Gastrocnemius medialis (tissue), 4 donors: ENCODE measurements at regions of chr6 and their contacts with region 1.

Region 1: DNA sequence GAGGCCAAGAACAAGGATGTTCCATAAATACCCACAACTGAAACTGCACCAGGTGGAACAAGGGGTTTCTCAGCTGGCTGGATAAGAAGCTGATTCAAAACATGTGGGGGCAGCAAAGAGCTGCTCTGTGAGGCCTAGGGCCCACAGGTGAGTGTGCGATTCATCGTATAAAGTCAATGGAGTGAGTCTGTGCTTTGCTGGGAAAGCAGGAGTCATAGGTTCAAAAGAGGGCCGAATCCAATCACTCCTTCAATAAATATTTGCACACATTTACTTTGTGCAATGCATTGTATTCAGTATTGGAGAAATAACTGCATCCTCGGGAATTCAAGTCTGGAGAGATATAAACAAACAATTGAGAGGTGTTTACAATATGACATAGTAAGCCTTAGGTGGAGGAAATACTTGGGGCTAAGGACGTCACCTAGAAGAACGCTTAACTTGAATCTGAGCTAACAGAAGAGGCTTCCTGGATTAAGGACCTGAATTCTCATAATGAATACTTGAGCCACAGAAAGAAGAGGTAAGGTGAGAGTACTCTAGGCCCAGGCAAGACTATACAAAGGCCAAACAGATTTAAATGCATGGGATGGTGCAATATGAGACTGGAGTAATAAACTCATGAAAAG is 83.7 kb upstream of the TMEM30A start:
- DNase-seq: peak; percentile 51 to 77
- ATAC-seq: peak; percentile 86 to 92
- H3K4me3 ChIP-seq: no peak overlapping the region
- H3K27ac ChIP-seq: peak overlapping the region; percentile 68 to 84 (median 76)
- H3K4me1 ChIP-seq: peaks cover 46 to 49% of the 10 kb centered on the region in 2 donors
- H3K27me3 ChIP-seq: no peaks in the 10 kb centered on the region
- CTCF ChIP-seq: peak; percentile 60 to 71 (median 64)
- POLR2A ChIP-seq: no peak

Region 2: DNA sequence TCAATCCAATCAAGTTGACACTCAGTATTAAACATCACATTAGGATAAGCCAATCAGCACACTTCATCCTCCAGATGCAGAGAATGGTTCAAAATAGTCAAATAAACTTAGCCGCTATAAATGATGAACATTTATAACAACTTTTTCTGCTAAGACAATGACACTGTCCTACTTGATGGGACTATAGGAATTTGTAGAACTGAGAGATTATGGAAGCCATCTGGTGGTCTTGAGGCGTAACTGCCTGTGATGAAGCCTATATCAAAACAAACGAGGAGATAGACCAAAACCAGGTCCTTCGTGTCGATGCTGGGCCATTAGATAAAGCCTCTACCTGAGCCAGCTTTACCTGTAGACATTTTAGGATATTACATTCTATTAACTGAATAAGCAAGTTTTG is 793.5 kb before region 1 on chr6:
- in situ Hi-C with region 1: no loop called
- intact Hi-C with region 1: no loop called
- DNase-seq: no peak
- ATAC-seq: no peak
- H3K4me3 ChIP-seq: no peak overlapping the region
- H3K27ac ChIP-seq: no peak overlapping the region
- H3K4me1 ChIP-seq: peaks cover 0 to 15% of the 10 kb centered on the region in 2 donors
- H3K27me3 ChIP-seq: no peaks in the 10 kb centered on the region
- CTCF ChIP-seq: no peak
- POLR2A ChIP-seq: no peak

Region 3: GRCh38 chr6:75296811-75297779 is 71.2 kb before region 1 on chr6:
- in situ Hi-C with region 1: no loop called
- intact Hi-C with region 1: loop called (anchors 1 kb)
- DNase-seq: no peak
- ATAC-seq: peak; percentile 43 to 47
- H3K4me3 ChIP-seq: no peak overlapping the region
- H3K27ac ChIP-seq: no peak overlapping the region
- H3K4me1 ChIP-seq: peaks cover 23 to 27% of the 10 kb centered on the region in 2 donors
- H3K27me3 ChIP-seq: no peaks in the 10 kb centered on the region
- CTCF ChIP-seq: peak; percentile 58 to 79 (median 67)
- POLR2A ChIP-seq: no peak

Region 4: GRCh38 chr6:75424618-75425548 is 56.6 kb after region 1 on chr6:
- in situ Hi-C with region 1: no loop called
- intact Hi-C with region 1: loop called (anchors 5 kb)
- DNase-seq: no peak
- ATAC-seq: no peak
- H3K4me3 ChIP-seq: no peak overlapping the region
- H3K27ac ChIP-seq: peak overlapping the region in 3 of 4 donors; percentile 1 to 54 (median 45)
- H3K4me1 ChIP-seq: peaks cover 83 to 91% of the 10 kb centered on the region in 2 donors
- H3K27me3 ChIP-seq: no peaks in the 10 kb centered on the region
- CTCF ChIP-seq: no peak
- POLR2A ChIP-seq: no peak

Region 5: GRCh38 chr6:75498862-75499261 is 130.6 kb after region 1 on chr6:
- in situ Hi-C with region 1: loop called in 2 of 4 experiments (anchors 5 to 10 kb)
- intact Hi-C with region 1: no loop called
- DNase-seq: no peak
- ATAC-seq: no peak
- H3K4me3 ChIP-seq: no peak overlapping the region
- H3K27ac ChIP-seq: peak overlapping the region in 2 of 4 donors; percentile 6 to 9
- H3K4me1 ChIP-seq: peaks cover 35 to 37% of the 10 kb centered on the region in 2 donors
- H3K27me3 ChIP-seq: no peaks in the 10 kb centered on the region
- CTCF ChIP-seq: no peak
- POLR2A ChIP-seq: no peak

Region 6: GRCh38 chr6:75526502-75527127 is 158.3 kb after region 1 on chr6:
- in situ Hi-C with region 1: no loop called
- intact Hi-C with region 1: loop called (anchors 1 kb)
- DNase-seq: peak; percentile 8 to 30
- ATAC-seq: peak; percentile 89 to 94
- H3K4me3 ChIP-seq: no peak overlapping the region
- H3K27ac ChIP-seq: no peak overlapping the region
- H3K4me1 ChIP-seq: no peaks in the 10 kb centered on the region
- H3K27me3 ChIP-seq: no peaks in the 10 kb centered on the region
- CTCF ChIP-seq: peak; percentile 72 to 84 (median 74)
- POLR2A ChIP-seq: no peak

Region 7: DNA sequence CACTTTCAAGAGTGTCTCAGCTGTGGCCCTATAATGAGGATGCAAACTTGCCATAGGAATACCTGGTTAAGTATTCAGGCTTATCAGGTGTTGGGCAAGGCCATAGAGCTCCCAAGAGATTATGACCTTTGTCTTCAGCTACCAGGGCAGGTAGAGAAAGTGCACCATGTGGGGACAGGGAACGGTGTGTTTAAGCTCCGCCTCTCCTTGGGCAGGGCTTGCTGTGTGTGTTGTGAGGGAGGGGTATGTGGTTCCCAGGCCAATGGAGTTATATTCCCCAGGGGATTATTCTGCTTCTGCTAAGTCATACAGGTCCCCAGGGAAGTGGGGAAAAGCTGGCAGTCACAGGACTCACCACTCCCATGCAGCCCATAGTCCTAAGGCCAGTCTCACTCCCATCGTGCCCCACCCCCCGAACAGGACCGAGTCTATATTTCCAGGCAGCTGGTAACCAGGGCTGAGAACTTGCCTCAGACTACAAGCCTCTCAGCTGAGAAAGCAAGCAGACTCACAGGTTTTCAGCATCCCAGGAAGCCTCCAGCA is 1434.8 kb after region 1 on chr6:
- in situ Hi-C with region 1: no loop called
- intact Hi-C with region 1: no loop called
- DNase-seq: no peak
- ATAC-seq: no peak
- H3K4me3 ChIP-seq: no peak overlapping the region
- H3K27ac ChIP-seq: no peak overlapping the region
- H3K4me1 ChIP-seq: no peaks in the 10 kb centered on the region
- H3K27me3 ChIP-seq: no peaks in the 10 kb centered on the region
- CTCF ChIP-seq: no peak
- POLR2A ChIP-seq: no peak